Mammary epithelial cell (primary cell): ENCODE measurements at regions of chr21 and their contacts with region 1.

Region 1: GRCh38 chr21:31866077-31866511 is 6.7 kb upstream of the HUNK start:
- DNase-seq: peak; percentile 53
- H3K4me3 ChIP-seq: no peak overlapping the region
- H3K27ac ChIP-seq: no peak overlapping the region
- H3K4me1 ChIP-seq: no peaks in the 10 kb centered on the region
- H3K27me3 ChIP-seq: no peaks in the 10 kb centered on the region
- CTCF ChIP-seq: peak; percentile 56 to 75

Region 2: GRCh38 chr21:30382201-30382600 is 1483.9 kb before region 1 on chr21:
- CTCF ChIA-PET with region 1: no interaction called
- dilution Hi-C with region 1: no loop called
- in situ Hi-C with region 1: no loop called
- intact Hi-C with region 1: no loop called
- DNase-seq: no peak
- H3K4me3 ChIP-seq: no peak overlapping the region
- H3K27ac ChIP-seq: no peak overlapping the region
- H3K4me1 ChIP-seq: no peaks in the 10 kb centered on the region
- H3K27me3 ChIP-seq: no peaks in the 10 kb centered on the region
- CTCF ChIP-seq: no peak

Region 3: GRCh38 chr21:31781737-31782136 is 84.4 kb before region 1 on chr21:
- CTCF ChIA-PET with region 1: no interaction called
- dilution Hi-C with region 1: no loop called
- in situ Hi-C with region 1: no loop called
- intact Hi-C with region 1: loop called (anchors 1 kb)
- DNase-seq: no peak
- H3K4me3 ChIP-seq: no peak overlapping the region
- H3K27ac ChIP-seq: no peak overlapping the region
- H3K4me1 ChIP-seq: no peaks in the 10 kb centered on the region
- H3K27me3 ChIP-seq: no peaks in the 10 kb centered on the region
- CTCF ChIP-seq: no peak